Endothelial cell of umbilical vein (primary cell): ENCODE measurements at regions of chr10 and their contacts with region 1.

Region 1: DNA sequence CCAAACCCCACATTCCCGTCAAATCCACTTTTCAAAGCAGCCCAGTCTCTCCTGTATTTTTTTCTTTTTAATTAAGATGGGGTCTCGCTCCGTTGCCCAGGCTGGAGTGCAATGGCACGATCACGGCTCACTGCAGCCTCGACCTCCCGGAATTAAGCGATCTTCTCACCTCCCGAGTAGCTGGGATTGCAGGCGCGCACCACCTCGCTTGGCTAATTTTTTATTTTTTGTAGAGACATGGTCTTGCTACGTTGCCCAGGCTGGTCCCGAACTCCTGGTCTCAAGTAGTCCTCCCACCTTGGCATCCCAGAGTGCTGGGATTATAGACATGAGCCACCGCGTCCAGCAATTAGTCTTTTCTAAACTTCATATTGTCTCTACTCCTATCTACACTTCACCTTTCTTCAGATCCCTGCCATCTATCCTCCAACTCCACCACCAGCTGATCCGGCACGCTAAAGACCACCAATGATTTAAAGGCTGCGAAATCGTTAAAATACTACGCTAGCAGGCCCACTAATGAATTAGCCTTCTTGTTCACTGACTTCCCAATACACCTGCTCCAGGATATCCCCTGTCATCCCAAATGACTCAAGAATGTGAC is 525 bp upstream of the CHUK start:
- DNase-seq: no peak
- H3K4me3 ChIP-seq: peak overlapping the region; percentile 42 to 72 (median 69)
- H3K27ac ChIP-seq: peak overlapping the region; percentile 46
- H3K4me1 ChIP-seq: peaks cover 2% of the 10 kb centered on the region
- H3K27me3 ChIP-seq: no peaks in the 10 kb centered on the region
- CTCF ChIP-seq: no peak
- POLR2A ChIP-seq: no peak

Region 2: DNA sequence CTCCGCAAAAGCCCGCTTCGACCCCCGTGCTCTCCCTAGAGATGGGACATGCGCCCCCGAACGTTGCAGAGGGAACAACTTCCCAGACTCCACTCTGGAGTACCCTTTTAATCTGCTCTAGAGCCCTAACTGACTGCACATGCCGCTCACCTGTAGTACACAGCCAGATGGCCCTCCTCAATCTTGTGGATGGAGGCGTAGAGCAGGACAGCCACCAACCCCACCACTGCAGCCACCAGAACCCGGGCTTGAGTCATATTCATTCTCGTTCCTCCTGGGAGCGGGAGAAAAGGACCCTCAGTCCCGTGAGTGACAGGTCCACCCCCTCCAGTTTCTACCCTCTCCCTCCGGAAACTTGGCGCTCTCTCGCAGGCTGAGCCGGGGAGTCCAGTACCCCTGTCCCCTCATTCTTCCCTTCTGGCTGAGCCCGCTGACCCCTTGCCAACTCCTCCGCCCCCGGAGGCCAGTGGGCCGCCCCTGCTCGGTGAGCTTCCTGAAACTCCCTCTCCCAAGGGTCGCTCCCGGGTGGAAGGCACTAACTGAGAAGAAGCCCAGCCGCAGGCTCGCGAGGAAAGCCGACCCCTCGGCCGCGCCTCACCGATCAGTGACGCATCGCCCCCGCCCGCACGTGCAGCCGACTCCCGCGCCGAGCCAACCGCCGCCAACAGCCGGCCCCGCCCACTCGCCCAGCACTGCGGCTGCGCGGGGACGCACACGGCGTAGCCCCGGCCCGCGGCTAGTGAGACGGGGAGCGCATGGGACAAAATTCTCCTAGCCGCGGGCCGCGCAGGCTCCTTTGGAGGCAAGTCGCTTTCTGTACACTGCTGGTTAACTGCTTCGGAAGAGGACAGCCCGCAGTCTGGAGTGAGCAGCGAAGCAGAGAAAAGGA is 44.3 kb before region 1 on chr10 and contains the start of gene ERLIN1:
- CTCF ChIA-PET with region 1: no interaction called
- POLR2A ChIA-PET with region 1: no interaction called
- dilution Hi-C with region 1: no loop called
- intact Hi-C with region 1: loop called (anchors 1 kb)
- DNase-seq: peak; percentile 95
- H3K4me3 ChIP-seq: peak within 1 kb of the TSS; percentile 51 to 89 (median 55)
- H3K27ac ChIP-seq: peak within 1 kb of the TSS; percentile 42
- H3K4me1 ChIP-seq: peaks cover 16% of the 10 kb centered on the region
- H3K27me3 ChIP-seq: no peaks in the 10 kb centered on the region
- CTCF ChIP-seq: peak in 1 of 2 donors; percentile 8
- POLR2A ChIP-seq: peak; percentile 88
- total RNA-seq, gene ERLIN1: 51.0 and 51.9 TPM in 2 replicates